ENCODE measurements at regions of chr1 and their contacts with region 1.

Region 1: DNA sequence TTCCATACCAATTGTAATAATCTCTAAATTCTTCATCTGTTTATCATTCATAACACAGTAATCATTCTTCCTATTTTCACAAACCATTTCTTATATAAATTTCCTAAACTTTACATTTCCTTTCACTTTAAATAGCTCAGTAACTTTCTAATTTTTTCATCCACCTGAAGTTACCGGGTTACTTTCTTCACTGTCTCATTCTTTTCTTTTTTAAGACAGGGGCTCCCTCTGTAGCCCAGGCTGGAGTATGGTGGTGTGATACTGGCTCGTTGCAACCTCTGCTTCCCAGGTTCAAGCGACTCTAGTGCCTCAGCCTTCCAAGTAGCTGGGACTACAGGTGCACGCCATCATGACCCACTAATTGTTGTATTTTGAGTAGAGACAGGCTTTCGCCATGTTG is 41.3 kb downstream of the RERE start:
- DNase-seq: peak; percentile 27
- H3K4me3 ChIP-seq: no peak overlapping the region
- H3K27ac ChIP-seq: no peak overlapping the region
- H3K4me1 ChIP-seq: no peaks in the 10 kb centered on the region
- H3K27me3 ChIP-seq: no peaks in the 10 kb centered on the region
- CTCF ChIP-seq: peak; percentile 32

Region 2: DNA sequence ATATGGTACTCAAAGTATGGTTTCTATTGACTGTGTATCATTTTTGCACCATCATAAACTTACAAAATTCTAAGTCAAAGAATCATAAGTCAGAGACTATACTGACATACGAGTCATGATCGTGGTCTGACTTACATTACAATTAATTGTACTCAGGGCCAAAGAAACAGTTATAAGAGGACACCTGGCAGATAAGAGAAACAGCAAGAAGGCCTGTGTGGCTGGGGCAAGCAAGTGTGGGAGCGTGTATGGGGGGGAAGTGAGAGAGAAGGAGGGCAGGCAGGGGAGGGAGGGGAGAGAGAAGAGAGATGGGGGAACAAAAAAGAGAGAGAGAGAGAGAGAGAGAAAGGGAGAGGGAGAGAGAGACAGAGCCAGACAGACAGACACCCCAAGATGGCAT is 29.6 kb before region 1 on chr1:
- CTCF ChIA-PET with region 1: no interaction called
- POLR2A ChIA-PET with region 1: no interaction called
- intact Hi-C with region 1: no loop called
- DNase-seq: no peak
- H3K4me3 ChIP-seq: no peak overlapping the region
- H3K27ac ChIP-seq: no peak overlapping the region
- H3K4me1 ChIP-seq: peaks cover 27% of the 10 kb centered on the region
- H3K27me3 ChIP-seq: no peaks in the 10 kb centered on the region
- CTCF ChIP-seq: no peak

Region 3: GRCh38 chr1:8809342-8809736 is 33.2 kb after region 1 on chr1:
- CTCF ChIA-PET with region 1: interaction called, 18 read pairs
- POLR2A ChIA-PET with region 1: no interaction called
- intact Hi-C with region 1: no loop called
- DNase-seq: no peak
- H3K4me3 ChIP-seq: no peak overlapping the region
- H3K27ac ChIP-seq: no peak overlapping the region
- H3K4me1 ChIP-seq: peaks cover 27% of the 10 kb centered on the region
- H3K27me3 ChIP-seq: no peaks in the 10 kb centered on the region
- CTCF ChIP-seq: no peak

Measured in A673 (cell line).